Common myeloid progenitor, CD34-positive (primary cell): ENCODE measurements at regions of chr12 and their contacts with region 1.

Region 1: DNA sequence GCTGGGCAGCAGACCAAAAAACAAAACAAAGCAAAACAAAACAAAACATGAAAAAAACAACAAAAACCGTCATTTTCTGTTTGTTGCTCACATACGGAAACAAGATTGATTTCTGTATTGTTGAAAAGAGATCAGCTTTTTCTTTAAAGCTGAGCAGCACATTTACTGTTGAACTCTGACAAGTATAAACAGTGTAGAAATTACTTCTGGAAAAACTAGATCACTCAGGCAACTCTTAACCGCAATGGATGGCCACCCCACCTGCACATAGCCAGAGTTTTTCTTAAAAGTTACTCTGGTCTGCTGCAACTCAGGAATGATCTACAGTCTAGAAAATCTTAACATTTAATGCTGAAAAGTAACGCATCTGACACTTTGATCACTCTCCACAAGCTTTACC is 80.9 kb downstream of the PPM1H start:
- DNase-seq: peak in 1 of 3 donors; percentile 46
- H3K4me3 ChIP-seq: no peak overlapping the region
- H3K27ac ChIP-seq: no peak overlapping the region
- H3K4me1 ChIP-seq: peaks cover 0 to 9% (median 2%) of the 10 kb centered on the region in 4 experiments
- H3K27me3 ChIP-seq: no peaks in the 10 kb centered on the region

Region 2: GRCh38 chr12:62841846-62842245 is 12.2 kb before region 1 on chr12:
- CTCF ChIA-PET with region 1: interaction called, 12 read pairs
- POLR2A ChIA-PET with region 1: interaction called, 3 read pairs
- DNase-seq: peak; percentile 58 to 88 (median 78)
- H3K4me3 ChIP-seq: peak overlapping the region in 2 of 7 experiments; percentile 5 to 44
- H3K27ac ChIP-seq: no peak overlapping the region
- H3K4me1 ChIP-seq: peaks cover 6 to 53% (median 34%) of the 10 kb centered on the region in 4 experiments
- H3K27me3 ChIP-seq: no peaks in the 10 kb centered on the region